ENCODE measurements at regions of chr2 and their contacts with region 1.

Region 1: GRCh38 chr2:177983183-177983788 is 89.3 kb downstream of the PDE11A start:
- DNase-seq: peak in 1 of 35 experiments; percentile 12
- ATAC-seq: no peak
- H3K4me3 ChIP-seq: no peak overlapping the region
- H3K4me3 Mint-ChIP-seq: no peak overlapping the region
- H3K27ac ChIP-seq: no peak overlapping the region
- H3K27ac Mint-ChIP-seq: no peak overlapping the region
- H3K4me1 ChIP-seq: no peaks in the 10 kb centered on the region
- H3K4me1 Mint-ChIP-seq: no peaks in the 10 kb centered on the region
- H3K27me3 ChIP-seq: peaks cover 0 to 3% of the 10 kb centered on the region in 2 experiments
- H3K27me3 Mint-ChIP-seq: peaks cover 0 to 8% of the 10 kb centered on the region in 2 donors

Region 2: GRCh38 chr2:177906041-177906718 is 77.1 kb before region 1 on chr2:
- CTCF ChIA-PET with region 1: no interaction called
- POLR2A ChIA-PET with region 1: interaction called in 1 of 2 experiments, 12 read pairs
- DNase-seq: peak; percentile 4 to 63 (median 28)
- ATAC-seq: peak in 3 of 4 experiments; percentile 55 to 73 (median 62)
- H3K4me3 ChIP-seq: no peak overlapping the region
- H3K4me3 Mint-ChIP-seq: no peak overlapping the region
- H3K27ac ChIP-seq: no peak overlapping the region
- H3K27ac Mint-ChIP-seq: no peak overlapping the region
- H3K4me1 ChIP-seq: no peaks in the 10 kb centered on the region
- H3K4me1 Mint-ChIP-seq: peaks cover 5 to 7% (median 7%) of the 10 kb centered on the region in 3 donors
- H3K27me3 ChIP-seq: peaks cover 0 to 3% of the 10 kb centered on the region in 2 experiments
- H3K27me3 Mint-ChIP-seq: peaks cover 0 to 4% of the 10 kb centered on the region in 2 donors

Region 3: GRCh38 chr2:178412047-178412446 is 428.8 kb after region 1 on chr2:
- CTCF ChIA-PET with region 1: no interaction called
- POLR2A ChIA-PET with region 1: no interaction called
- DNase-seq: no peak
- ATAC-seq: no peak
- H3K4me3 ChIP-seq: no peak overlapping the region
- H3K4me3 Mint-ChIP-seq: no peak overlapping the region
- H3K27ac ChIP-seq: no peak overlapping the region
- H3K27ac Mint-ChIP-seq: no peak overlapping the region
- H3K4me1 ChIP-seq: peaks cover 11 to 15% of the 10 kb centered on the region in 2 experiments
- H3K4me1 Mint-ChIP-seq: peaks cover 21 to 30% (median 22%) of the 10 kb centered on the region in 3 donors
- H3K27me3 ChIP-seq: no peaks in the 10 kb centered on the region
- H3K27me3 Mint-ChIP-seq: no peaks in the 10 kb centered on the region

Measured in T-cell (primary cell).